ENCODE measurements at regions of chr4 and their contacts with region 1.

Region 1: DNA sequence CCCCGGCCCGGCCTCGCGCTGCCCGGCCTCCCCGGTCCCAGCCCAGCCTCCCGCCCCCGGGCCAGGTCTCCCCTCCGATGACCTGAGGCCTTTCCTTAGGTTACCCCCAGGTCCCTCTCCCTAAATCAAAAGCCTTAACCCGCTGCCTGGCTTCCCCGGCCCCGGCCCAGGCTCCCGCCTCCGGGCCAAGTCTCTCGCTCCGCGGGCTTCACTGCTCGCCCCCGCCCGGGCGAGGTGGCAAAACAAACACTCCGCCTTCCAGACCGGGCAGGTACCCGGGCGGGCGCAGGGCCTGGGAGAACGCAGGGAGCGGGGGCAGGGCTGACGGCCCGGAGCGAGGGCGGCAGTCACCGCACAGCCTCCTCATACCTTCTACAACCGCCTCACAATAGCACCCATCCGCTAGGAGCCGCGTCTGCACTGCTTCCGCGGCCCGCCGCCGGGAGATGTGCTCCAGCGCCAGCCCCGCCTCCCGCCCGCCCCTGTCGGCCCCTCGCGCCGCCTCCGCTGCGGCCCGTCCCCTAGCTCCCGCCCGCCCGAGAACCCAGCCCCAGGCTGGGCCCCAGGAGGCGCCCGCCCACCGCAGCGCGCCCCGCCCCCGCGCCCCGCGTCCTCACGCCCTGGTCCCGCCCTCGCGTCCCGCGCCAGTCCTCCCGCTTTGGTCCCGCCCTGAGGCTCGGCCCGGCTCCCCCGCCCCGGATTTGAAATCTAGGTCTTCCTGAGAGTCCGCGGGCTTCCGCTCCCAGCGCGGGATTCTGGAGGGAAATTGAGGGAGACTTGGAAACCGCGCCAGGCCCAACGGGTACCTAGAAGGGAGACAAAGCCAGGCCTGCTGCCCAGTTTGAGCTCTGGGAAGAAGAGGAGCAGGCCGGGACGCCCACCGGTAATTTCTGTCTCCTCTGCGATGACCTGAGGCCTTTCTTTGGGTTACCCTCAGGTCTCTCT is at the starts of genes CASP3 and PRIMPOL:
- DNase-seq: peak; percentile 85 to 98 (median 94)
- ATAC-seq: peak; percentile 86 to 87
- H3K4me3 Mint-ChIP-seq: peak within 1 kb of the TSS; percentile 89 to 99 (median 96)
- H3K27ac Mint-ChIP-seq: peak within 1 kb of the TSS; percentile 92 to 98 (median 96)
- H3K4me1 Mint-ChIP-seq: peaks cover 33 to 60% (median 55%) of the 10 kb centered on the region in 4 donors
- H3K27me3 Mint-ChIP-seq: no peaks in the 10 kb centered on the region
- polyA plus RNA-seq, gene CASP3: 1.9 to 4.7 (median 3.3) TPM
- polyA plus RNA-seq, gene PRIMPOL: 12.1 to 16.5 (median 12.7) TPM

Region 2: GRCh38 chr4:184474263-184475095 is 174.8 kb before region 1 on chr4 and contains the start of gene IRF2:
- POLR2A ChIA-PET with region 1: interaction called, 17 read pairs
- DNase-seq: peak; percentile 85 to 99 (median 95)
- ATAC-seq: peak; percentile 78 to 82
- H3K4me3 Mint-ChIP-seq: peak within 1 kb of the TSS; percentile 92 to 100 (median 98)
- H3K27ac Mint-ChIP-seq: peak within 1 kb of the TSS; percentile 97 to 99 (median 98)
- H3K4me1 Mint-ChIP-seq: peaks cover 40 to 70% (median 68%) of the 10 kb centered on the region in 4 donors
- H3K27me3 Mint-ChIP-seq: no peaks in the 10 kb centered on the region
- polyA plus RNA-seq, gene IRF2: 72.7 to 80.7 (median 78.3) TPM

Region 3: GRCh38 chr4:184538023-184538599 is 111.2 kb before region 1 on chr4:
- POLR2A ChIA-PET with region 1: interaction called, 18 read pairs
- DNase-seq: peak; percentile 15 to 80 (median 62)
- ATAC-seq: peak; percentile 52 to 53
- H3K4me3 Mint-ChIP-seq: peak overlapping the region; percentile 90 to 99 (median 95)
- H3K27ac Mint-ChIP-seq: peak overlapping the region; percentile 90 to 100 (median 99)
- H3K4me1 Mint-ChIP-seq: peaks cover 19 to 43% (median 37%) of the 10 kb centered on the region in 4 donors
- H3K27me3 Mint-ChIP-seq: no peaks in the 10 kb centered on the region

Region 4: DNA sequence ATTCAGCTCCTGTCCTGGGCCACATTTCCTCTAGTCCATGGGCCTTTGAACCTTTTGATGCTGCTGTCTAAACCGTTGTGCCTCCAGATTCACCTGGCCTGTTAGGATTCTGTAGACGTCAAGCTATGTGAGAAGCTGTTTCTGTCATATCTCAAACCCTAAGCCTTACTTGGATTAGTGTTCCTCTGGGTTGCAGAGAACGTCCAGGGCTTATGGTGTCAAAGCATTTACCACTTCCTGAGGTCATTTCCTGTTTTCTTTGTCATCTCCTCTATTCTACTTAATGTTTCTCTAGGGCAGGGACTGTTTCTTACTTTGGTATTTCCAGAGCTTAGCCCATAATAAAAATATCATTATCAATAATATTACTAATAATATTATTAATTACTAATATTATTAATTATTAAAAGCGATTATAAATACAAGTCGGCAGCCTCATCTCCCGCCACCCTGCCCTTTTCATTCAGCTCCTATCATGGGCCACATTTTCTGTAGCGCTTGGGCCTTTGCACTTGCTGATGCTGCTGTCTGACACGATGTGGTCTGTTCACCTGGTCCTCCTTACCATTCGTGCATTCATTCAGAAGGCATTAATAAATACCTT is 19.3 kb after region 1 on chr4:
- POLR2A ChIA-PET with region 1: interaction called, 10 read pairs
- DNase-seq: peak in 2 of 10 donors; percentile 22 to 28
- ATAC-seq: peak in 1 of 2 donors; percentile 65
- H3K4me3 Mint-ChIP-seq: peak overlapping the region in 4 of 10 donors; percentile 4 to 30 (median 14)
- H3K27ac Mint-ChIP-seq: peak overlapping the region; percentile 17 to 93 (median 72)
- H3K4me1 Mint-ChIP-seq: peaks cover 20 to 27% (median 21%) of the 10 kb centered on the region in 4 donors
- H3K27me3 Mint-ChIP-seq: no peaks in the 10 kb centered on the region

Region 5: DNA sequence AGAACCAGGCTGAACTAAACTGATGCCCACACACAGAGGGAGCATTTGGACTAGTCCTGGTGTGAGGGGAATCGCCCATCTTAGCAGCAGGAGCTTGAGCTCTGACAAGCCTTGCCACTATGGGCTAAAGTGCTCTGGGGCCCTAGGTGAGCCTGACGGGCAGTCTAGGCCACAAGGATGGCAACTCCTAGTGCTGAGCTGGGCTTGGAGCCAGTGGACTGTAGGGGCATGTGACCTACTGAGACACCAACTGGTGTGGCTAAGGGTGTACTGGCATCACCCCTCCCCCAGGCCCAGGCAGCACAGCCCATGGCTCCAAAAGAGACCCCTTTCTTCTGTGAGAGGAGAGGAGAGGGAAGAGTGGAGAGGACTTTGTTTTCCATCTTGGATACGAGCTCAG is 70.1 kb after region 1 on chr4:
- POLR2A ChIA-PET with region 1: no interaction called
- DNase-seq: no peak
- ATAC-seq: no peak
- H3K4me3 Mint-ChIP-seq: no peak overlapping the region
- H3K27ac Mint-ChIP-seq: peak overlapping the region in 1 of 10 donors; percentile 57
- H3K4me1 Mint-ChIP-seq: peaks cover 0 to 6% (median 1%) of the 10 kb centered on the region in 4 donors
- H3K27me3 Mint-ChIP-seq: no peaks in the 10 kb centered on the region

Region 6: DNA sequence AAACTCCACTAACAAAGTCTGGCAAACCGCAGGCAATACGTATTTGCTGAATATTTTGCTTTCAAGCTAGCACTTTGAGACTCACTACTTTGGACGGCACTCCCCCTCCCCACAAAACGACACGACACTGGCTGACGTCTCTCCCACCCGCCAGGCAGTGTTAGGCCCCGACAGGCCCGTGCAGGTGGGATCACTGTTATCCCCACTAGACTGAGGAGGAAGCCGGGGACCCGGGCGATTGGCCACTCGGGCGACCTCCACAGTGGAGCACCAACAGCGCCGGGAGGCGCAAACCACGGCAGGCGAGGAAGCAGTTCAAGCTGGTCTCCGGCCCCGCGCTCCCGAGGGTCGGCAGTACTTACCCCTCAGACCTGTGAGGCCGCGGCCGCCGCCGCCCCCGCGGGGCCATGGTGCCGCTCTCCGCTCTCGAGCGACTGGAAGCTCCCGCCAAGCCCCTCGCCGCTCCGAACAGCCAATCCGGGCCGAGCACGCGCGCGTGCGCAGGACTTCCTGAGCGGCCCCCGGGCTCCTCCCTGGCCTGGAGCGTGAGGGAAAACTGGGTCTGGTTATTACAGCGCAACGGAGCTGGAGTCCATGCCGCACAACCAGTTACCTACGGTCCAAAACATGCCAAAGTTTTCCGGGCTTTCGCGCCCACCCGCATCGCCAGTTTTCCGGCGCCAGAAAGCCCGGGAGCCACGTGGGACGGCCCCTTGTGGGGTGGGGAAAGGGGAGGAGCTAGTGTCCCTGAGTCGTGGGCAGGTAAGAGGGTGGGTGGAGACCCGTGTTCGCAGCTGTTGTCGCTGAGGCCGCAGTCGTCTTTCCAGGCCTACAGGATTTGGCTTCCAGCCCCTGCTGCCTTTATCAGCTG is 84.6 kb after region 1 on chr4 and contains the start of gene CENPU:
- POLR2A ChIA-PET with region 1: interaction called, 11 read pairs
- DNase-seq: peak; percentile 88 to 96 (median 92)
- ATAC-seq: peak; percentile 94 to 96
- H3K4me3 Mint-ChIP-seq: peak within 1 kb of the TSS; percentile 81 to 97 (median 90)
- H3K27ac Mint-ChIP-seq: peak within 1 kb of the TSS; percentile 76 to 95 (median 88)
- H3K4me1 Mint-ChIP-seq: peaks cover 4 to 26% (median 16%) of the 10 kb centered on the region in 4 donors
- H3K27me3 Mint-ChIP-seq: no peaks in the 10 kb centered on the region
- polyA plus RNA-seq, gene CENPU: 1.7 to 2.8 TPM in 2 of 3 donors, not detected in the other